ENCODE measurements at regions of chr21 and their contacts with region 1.

Region 1: DNA sequence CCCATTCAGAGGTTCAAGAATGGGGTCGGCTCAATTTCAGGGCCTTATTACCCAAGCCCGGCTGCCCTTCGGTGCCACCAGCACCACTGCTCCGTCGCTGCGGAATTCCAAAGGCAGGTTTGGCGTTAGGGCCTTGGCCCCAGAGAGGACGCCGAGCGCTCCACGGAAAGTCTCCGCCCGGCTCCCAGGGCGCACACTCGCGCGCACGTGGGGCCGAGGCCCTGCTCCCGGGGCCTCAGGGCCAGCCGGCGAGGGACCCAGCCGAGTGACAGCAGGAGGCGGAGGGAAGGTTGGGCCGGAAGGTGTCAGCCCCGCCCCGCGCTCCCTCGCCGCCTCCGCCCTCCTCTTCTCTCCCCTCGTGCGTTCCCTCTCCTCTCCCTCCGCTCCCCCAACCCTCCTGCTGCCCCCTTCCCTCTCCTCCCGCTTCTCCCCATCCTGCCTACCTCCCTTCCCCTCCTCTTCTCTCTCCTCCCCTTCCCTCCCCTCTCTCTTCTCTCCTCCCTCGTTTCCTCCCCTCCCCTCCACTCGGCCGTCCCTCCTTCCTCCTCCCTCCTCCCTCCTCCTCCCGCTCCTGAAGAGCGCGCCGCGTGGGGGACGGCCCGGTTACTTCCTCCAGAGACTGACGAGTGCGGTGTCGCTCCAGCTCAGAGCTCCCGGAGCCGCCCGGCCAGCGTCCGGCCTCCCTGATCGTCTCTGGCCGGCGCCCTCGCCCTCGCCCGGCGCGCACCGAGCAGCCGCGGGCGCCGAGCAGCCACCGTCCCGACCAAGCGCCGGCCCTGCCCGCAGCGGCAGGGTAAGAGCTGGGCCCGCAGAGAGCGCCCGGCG is at the start of gene ETS2:
- DNase-seq: peak; percentile 92
- ATAC-seq: peak; percentile 91 to 92
- total RNA-seq, gene ETS2: 48.7 to 114 TPM

Region 2: DNA sequence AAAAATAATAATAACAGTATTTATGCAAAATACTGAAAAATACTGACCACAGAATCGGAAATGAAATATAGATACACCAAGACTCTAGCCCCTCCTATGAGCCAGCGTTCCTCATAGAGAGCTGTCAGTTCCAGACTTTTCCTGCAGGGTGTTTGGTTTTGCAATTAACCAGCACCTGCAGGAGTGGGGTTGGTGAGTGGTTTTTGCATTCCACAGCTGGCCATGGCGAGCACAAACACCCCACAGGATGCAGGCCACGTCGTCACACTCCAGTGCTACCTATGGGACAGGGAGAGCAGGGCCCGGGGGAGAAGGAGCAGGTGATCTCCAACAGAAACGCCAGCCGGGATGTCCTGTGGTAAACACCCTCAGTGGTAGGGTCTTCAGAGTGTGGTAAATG is 401.4 kb before region 1 on chr21:
- intact Hi-C with region 1: no loop called
- DNase-seq: no peak
- ATAC-seq: no peak

Region 3: DNA sequence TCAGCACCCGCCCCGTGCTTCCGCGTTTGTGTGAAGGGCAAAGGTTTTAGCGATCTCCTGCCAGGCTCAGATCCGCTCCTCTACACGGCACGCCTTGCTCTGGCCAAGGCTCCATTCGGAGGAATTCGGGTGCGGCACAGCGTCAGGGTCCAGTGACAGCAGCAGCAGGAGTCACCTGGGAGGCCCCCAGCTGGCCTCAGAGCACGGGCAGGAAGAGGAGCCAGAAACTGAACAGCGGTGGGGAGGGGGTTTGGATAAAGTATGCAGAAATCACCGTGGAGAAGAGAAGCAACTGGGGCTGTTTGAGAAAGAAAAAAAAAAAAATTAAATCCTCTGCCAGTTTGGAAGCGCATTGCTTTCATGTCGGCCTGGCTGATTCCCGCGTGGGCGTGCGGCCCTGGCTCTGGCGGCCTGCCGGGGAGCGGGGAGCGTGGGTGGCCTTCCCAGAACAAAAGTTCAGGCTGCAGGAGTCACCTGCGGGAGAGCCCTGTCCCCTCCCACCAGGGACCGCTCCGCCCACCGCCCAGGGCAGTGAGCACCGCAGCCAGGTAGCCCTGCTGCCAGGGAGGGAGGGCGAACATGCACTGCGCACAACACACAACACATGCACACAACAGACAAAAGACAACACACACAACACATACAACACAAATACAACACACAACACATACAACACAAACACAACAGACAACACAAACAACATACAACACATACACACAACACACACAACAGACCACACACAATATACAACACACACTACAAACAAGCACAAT is 107.8 kb after region 1 on chr21:
- intact Hi-C with region 1: loop called in 1 of 2 experiments (anchors 5 kb)
- DNase-seq: peak; percentile 77
- ATAC-seq: peak; percentile 74 to 78

Region 4: GRCh38 chr21:38985568-38986378 is 180.2 kb after region 1 on chr21:
- intact Hi-C with region 1: loop called in 1 of 2 experiments (anchors 5 kb)
- DNase-seq: peak; percentile 72
- ATAC-seq: peak; percentile 54 to 63

Region 5: GRCh38 chr21:39125752-39126485 is 320.4 kb after region 1 on chr21:
- intact Hi-C with region 1: loop called in 1 of 2 experiments (anchors 1 kb)
- DNase-seq: peak; percentile 40
- ATAC-seq: peak; percentile 93 to 95

Measured in left cardiac atrium (tissue), 4 donors.